ENCODE measurements at regions of chr1 and their contacts with region 1.

Region 1: GRCh38 chr1:35715568-35716002 is 3.1 kb downstream of the C1orf216 start:
- DNase-seq: peak; percentile 79
- ATAC-seq: peak; percentile 59
- H3K4me3 ChIP-seq: no peak overlapping the region
- H3K4me3 Mint-ChIP-seq: peak overlapping the region; percentile 51
- H3K27ac ChIP-seq: no peak overlapping the region
- H3K27ac Mint-ChIP-seq: peak overlapping the region; percentile 54
- H3K4me1 ChIP-seq: peaks cover 10 to 20% of the 10 kb centered on the region in 2 donors
- H3K4me1 Mint-ChIP-seq: peaks cover 29% of the 10 kb centered on the region
- H3K27me3 ChIP-seq: peaks cover 0 to 3% (median 0%) of the 10 kb centered on the region in 4 experiments
- H3K27me3 Mint-ChIP-seq: no peaks in the 10 kb centered on the region
- CTCF ChIP-seq: peak; percentile 98

Region 2: GRCh38 chr1:35702508-35702907 is 13.1 kb before region 1 on chr1:
- CTCF ChIA-PET with region 1: interaction called, 16 read pairs
- POLR2A ChIA-PET with region 1: no interaction called
- intact Hi-C with region 1: no loop called
- DNase-seq: no peak
- ATAC-seq: no peak
- H3K4me3 ChIP-seq: no peak overlapping the region
- H3K4me3 Mint-ChIP-seq: no peak overlapping the region
- H3K27ac ChIP-seq: no peak overlapping the region
- H3K27ac Mint-ChIP-seq: no peak overlapping the region
- H3K4me1 ChIP-seq: peaks cover 6 to 7% of the 10 kb centered on the region in 2 donors
- H3K4me1 Mint-ChIP-seq: peaks cover 9% of the 10 kb centered on the region
- H3K27me3 ChIP-seq: peaks cover 0 to 47% (median 38%) of the 10 kb centered on the region in 4 experiments
- H3K27me3 Mint-ChIP-seq: peaks cover 66% of the 10 kb centered on the region
- CTCF ChIP-seq: no peak